ENCODE measurements at regions of chr12 and their contacts with region 1.

Region 1: DNA sequence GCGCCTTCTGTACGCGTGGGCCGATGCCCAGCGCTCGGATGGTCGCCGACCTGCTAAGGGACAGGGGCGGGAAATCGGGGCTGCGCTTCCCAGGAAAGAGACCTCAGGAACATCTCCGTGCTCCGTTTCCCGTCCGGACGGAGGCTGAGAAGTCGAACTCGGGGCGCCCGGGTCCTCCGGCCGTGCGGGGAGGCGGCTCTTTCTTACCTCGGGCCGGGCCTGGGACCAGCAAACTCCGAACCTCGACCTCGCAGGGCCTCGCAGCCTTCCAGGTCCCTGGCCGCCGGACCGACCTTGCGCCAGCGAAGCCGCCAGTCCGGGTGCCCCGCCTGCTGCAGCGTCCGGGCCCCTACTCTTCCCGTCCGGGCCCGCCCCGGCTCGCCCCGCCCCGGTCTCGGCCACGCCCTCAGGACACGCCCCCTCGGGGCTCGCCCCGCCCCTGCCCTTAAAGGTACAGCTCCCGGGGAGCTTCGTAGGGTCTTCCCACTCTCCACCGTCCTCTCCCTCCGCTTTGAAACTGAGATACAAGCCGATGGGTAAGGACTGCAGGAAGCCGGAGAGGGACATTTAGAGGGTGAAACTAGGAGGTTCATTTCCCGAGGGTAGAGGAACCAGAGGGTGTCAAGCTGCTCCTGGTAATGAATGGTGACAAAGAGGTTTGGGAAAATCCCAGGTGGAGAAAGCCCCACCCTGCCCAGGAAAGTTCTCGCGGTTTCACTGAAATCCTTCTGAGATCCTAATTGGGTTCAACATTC is at the start of gene SLC8B1:
- DNase-seq: peak; percentile 96
- H3K4me3 Mint-ChIP-seq: peak within 1 kb of the TSS; percentile 97
- H3K27ac Mint-ChIP-seq: peak within 1 kb of the TSS; percentile 78
- H3K4me1 Mint-ChIP-seq: peaks cover 22% of the 10 kb centered on the region
- H3K27me3 Mint-ChIP-seq: no peaks in the 10 kb centered on the region
- total RNA-seq, gene SLC8B1: 19.5 and 20.0 TPM in 2 replicates

Region 2: DNA sequence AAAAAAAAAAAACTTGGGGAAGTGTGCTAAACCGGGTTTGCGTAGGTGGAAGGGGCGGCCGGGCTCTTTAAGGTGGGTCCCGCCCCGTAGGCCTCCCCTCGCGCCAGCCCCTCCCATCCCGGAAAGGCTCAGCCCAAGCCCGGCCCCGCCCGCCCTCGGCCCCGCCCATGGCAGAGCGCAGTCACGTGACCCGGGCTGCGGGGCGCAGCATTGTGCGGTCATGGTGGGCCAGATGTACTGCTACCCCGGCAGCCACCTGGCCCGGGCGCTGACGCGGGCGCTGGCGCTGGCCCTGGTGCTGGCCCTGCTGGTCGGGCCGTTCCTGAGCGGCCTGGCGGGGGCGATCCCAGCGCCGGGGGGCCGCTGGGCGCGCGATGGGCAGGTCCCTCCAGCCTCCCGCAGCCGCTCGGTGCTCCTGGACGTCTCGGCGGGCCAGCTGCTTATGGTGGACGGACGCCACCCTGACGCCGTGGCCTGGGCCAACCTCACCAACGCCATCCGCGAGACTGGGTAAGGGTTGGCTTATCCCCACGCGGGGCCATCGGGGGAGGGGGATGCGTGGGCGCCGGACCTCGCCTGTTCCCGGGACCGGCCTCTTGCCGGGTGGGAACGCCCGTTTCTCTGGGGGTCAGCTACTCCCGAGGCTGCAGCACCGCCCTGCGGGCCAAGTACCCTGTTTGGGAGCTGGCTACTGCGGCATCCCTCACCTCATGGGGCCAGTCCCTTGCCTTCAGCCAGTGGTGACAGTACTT is 23.6 kb after region 1 on chr12 and contains the start of gene PLBD2:
- intact Hi-C with region 1: loop called (anchors 1 kb)
- DNase-seq: peak; percentile 97
- H3K4me3 Mint-ChIP-seq: peak within 1 kb of the TSS; percentile 89
- H3K27ac Mint-ChIP-seq: peak within 1 kb of the TSS; percentile 76
- H3K4me1 Mint-ChIP-seq: peaks cover 16% of the 10 kb centered on the region
- H3K27me3 Mint-ChIP-seq: peaks cover 3% of the 10 kb centered on the region
- total RNA-seq, gene PLBD2: 16.0 and 16.3 TPM in 2 replicates

Region 3: DNA sequence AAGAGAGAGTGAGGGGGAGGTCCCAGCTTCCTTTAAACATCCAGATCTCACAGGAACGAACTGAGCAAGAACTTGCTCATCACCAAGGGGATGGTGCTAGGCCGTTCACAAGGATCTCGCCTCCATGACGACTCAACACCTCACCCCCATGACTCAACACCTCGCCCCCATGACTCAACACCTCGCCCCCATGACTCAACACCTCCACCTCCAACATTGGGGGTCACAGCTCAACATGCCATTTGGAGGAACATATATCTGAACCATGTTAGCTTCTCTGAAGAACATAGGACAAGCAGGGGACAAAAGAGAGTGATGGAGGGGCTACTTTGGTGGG is 202.8 kb after region 1 on chr12:
- intact Hi-C with region 1: no loop called
- DNase-seq: no peak
- H3K4me3 Mint-ChIP-seq: no peak overlapping the region
- H3K27ac Mint-ChIP-seq: no peak overlapping the region
- H3K4me1 Mint-ChIP-seq: no peaks in the 10 kb centered on the region
- H3K27me3 Mint-ChIP-seq: no peaks in the 10 kb centered on the region